ENCODE measurements at regions of chr5 and their contacts with region 1.

Region 1: GRCh38 chr5:179880848-179881590 is 22.4 kb upstream of the MRNIP start:
- DNase-seq: no peak
- H3K4me3 ChIP-seq: no peak overlapping the region
- CTCF ChIP-seq: no peak
- POLR2A ChIP-seq: no peak

Region 2: DNA sequence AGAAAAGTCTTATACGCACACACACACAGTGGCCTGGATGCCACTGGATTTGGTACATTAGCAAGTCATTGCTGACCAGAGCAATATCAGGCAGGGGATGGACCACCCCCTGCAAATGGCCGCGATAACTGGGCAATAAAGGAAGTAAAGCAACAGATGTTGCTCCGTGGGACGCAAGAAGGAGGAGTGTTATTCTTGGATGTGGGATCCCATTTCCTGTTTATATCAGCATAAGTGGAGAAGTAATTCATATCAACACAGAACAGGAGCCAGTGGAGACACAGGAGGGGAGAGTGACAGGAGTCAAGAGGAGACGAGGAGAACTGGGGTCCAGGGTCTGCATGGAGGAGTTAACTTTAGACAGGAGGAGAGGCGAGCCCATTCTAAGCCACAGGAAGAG is 312.3 kb before region 1 on chr5:
- intact Hi-C with region 1: no loop called
- DNase-seq: no peak
- H3K4me3 ChIP-seq: no peak overlapping the region
- CTCF ChIP-seq: no peak
- POLR2A ChIP-seq: no peak

Region 3: GRCh38 chr5:179893069-179893957 is 12.3 kb after region 1 on chr5:
- intact Hi-C with region 1: no loop called
- DNase-seq: no peak
- H3K4me3 ChIP-seq: no peak overlapping the region
- CTCF ChIP-seq: no peak
- POLR2A ChIP-seq: no peak

Region 4: DNA sequence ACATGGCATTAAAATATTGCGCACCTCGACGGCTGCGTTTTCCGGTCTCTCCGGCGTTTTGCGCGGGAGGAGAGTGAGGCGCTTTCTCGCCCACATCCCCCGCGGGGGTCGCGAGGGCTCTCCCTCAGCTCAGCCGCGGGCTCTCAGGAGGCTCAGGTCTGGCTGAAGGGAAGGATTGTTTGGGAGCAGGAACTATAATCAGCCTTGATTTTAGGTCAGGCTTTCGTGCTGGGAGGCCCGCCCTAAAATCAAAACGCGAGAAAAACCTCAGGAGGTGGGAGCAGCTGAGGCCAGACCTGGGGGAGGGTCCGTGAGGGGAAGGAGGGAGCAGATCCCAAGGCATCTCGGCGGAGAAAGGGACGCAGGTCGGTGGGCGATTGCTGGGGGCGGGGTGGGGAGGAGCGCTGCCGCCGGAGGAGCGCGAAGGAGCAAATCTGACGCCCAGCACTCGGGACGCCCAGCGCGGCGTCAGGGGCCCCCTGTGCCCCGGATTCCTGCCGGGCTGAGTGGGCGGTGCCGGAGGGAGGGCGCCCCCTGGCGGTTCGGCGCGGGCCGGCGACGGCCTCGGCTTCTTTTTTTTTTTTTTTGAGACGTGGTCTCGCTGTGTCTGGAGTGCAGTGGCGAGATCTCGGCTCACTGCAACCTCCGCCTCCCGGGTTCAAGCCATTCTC is 209.2 kb after region 1 on chr5:
- intact Hi-C with region 1: no loop called
- DNase-seq: peak in 1 of 2 donors; percentile 91
- H3K4me3 ChIP-seq: peak overlapping the region; percentile 21
- CTCF ChIP-seq: peak in 1 of 3 donors; percentile 36
- POLR2A ChIP-seq: no peak

Region 5: GRCh38 chr5:180428598-180428997 is 547.6 kb after region 1 on chr5:
- intact Hi-C with region 1: loop called (anchors 5 kb)
- DNase-seq: no peak
- H3K4me3 ChIP-seq: no peak overlapping the region
- CTCF ChIP-seq: no peak
- POLR2A ChIP-seq: no peak

Measured in lower leg skin (tissue), 4 donors.